Aorta (tissue), 5 donors: ENCODE measurements at regions of chr2 and their contacts with region 1.

Region 1: GRCh38 chr2:1750933-1751766 is 6.8 kb upstream of the PXDN start:
- DNase-seq: peak; percentile 81 to 91
- ATAC-seq: peak; percentile 65
- H3K4me3 ChIP-seq: no peak overlapping the region
- H3K27ac ChIP-seq: no peak overlapping the region
- H3K4me1 ChIP-seq: no peaks in the 10 kb centered on the region
- H3K27me3 ChIP-seq: no peaks in the 10 kb centered on the region

Region 2: DNA sequence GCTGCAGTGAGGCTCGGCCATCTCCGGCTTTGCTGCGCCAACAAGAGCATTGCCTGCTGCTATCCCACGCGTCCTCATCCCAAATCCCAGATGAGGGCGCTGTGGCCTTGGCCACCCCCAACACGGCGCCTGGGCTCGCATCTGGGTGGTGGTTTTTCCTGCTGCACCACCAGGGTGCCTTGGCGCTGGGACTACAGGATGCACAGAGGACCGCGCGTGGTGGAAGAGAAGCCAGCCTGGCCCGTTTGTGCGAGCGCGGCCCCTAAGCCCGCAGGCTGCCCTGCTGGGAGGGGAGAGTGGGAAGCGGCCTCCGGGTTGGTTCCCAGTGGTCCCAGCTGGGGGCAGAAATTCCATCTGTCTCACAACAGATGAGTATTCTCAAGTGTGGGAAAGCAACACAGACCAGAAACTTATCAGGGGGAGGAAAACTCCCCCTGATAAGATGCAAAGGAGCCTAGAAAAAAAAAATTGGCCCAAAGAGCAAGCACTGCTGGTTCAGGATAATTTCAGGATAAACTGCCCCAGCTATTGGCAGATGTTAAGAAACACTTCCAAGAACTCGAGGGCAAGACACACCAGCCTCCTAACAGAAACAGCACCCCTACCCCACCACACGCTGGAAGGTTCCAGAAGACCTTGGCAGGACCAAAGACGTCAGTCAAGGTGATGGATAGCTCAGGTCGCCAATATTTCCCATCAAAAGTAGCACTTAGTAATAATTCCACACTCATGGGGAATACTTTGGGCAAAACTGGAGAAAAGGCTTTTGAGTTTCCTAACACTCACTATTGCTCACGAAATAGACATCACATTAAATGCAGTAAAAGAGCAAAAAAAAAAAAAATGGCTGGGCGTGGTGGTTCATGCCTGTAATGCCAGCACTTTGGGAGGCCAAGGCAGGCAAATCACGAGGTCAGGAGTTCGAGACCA is 158.9 kb before region 1 on chr2:
- intact Hi-C with region 1: loop called (anchors 2 to 5 kb)
- DNase-seq: peak; percentile 88 to 92
- ATAC-seq: peak; percentile 79
- H3K4me3 ChIP-seq: no peak overlapping the region
- H3K27ac ChIP-seq: no peak overlapping the region
- H3K4me1 ChIP-seq: no peaks in the 10 kb centered on the region
- H3K27me3 ChIP-seq: no peaks in the 10 kb centered on the region